ENCODE measurements at regions of chr12 and their contacts with region 1.

Region 1: DNA sequence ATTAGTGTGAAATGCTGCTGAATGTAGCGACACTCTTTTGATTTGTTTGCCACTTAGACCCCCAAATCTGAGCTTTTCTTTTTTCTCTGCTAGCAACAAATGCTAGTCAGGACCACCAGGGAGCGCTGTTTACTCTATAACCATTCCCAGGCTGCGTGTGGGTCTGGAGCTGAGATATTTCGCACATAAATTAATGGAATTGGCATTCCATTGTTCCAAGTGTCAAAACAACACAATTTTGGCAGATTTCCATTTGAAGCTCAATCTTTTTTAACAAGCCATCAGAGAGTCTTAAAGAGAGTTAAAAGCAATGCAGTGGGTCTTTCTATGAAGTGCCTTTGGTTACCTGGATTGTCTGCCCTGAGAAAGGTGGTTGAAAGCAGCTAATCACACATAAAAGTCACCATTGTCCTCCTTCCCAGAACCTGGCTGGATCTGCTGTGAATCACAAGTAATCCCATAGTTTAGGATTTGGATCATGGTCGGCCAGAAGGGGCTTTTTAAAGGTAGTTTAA is 7.4 kb upstream of the TMEM132C start:
- DNase-seq: no peak
- CTCF ChIP-seq: peak; percentile 57

Region 2: DNA sequence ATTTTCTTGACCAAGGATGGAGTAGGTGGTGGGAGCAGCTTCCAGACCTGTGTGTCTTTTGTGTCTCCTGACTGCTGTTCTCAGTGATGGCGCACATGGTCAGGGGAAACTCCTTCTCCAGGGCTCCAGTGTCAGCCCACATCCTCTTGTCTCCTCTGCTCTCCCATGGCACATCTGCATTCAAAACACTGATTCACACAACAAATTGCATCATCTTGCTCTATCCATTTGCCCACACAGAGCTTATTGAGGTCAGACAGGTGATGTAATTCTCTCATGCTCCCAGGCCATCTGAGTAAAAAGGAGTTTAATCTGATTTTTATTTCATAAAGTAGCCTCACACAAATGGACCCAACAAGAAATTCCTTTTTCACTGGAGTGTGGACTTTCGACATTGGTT is 14.5 kb before region 1 on chr12:
- CTCF ChIA-PET with region 1: interaction called, 10 read pairs
- POLR2A ChIA-PET with region 1: no interaction called
- DNase-seq: no peak
- CTCF ChIP-seq: no peak

Region 3: DNA sequence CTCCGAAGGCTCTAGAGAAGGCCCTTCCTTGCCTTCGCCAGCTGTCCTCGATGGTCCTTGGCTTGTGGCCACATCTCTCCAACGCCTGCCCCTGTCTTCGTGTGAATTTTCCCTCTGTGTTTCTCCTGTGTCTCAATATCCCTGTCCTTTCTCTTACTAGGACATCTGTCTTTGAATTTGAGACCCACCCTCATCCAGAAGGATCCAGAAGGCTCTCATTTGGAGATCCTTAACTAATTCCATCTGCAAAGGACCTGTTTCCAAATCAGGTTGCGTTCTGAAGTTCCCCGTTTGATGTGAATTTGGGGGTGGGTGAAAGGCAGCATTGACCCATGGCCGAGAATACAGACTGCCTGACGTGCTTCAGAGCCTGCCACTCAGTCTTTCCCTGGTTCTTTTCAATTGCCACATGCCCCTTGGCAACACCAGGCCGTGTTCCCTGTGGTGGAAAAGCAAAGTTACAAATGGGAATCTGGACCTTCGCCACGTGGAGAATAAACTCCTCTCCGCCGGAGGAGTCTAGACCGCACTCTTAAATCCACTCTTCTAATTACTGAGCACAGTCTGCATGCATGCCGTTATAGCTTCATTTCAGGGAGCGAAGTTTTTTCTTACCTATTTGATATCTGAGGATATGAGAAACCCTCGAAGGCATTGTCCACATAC is 166.2 kb after region 1 on chr12:
- CTCF ChIA-PET with region 1: no interaction called
- POLR2A ChIA-PET with region 1: no interaction called
- DNase-seq: no peak
- CTCF ChIP-seq: no peak

Region 4: GRCh38 chr12:129083121-129083840 is 823.7 kb after region 1 on chr12:
- CTCF ChIA-PET with region 1: no interaction called
- POLR2A ChIA-PET with region 1: no interaction called
- DNase-seq: no peak
- CTCF ChIP-seq: no peak

Region 5: GRCh38 chr12:129911428-129912049 is 1651.9 kb after region 1 on chr12:
- CTCF ChIA-PET with region 1: interaction called, 38 read pairs
- POLR2A ChIA-PET with region 1: no interaction called
- DNase-seq: peak; percentile 64
- CTCF ChIP-seq: peak; percentile 95

Region 6: DNA sequence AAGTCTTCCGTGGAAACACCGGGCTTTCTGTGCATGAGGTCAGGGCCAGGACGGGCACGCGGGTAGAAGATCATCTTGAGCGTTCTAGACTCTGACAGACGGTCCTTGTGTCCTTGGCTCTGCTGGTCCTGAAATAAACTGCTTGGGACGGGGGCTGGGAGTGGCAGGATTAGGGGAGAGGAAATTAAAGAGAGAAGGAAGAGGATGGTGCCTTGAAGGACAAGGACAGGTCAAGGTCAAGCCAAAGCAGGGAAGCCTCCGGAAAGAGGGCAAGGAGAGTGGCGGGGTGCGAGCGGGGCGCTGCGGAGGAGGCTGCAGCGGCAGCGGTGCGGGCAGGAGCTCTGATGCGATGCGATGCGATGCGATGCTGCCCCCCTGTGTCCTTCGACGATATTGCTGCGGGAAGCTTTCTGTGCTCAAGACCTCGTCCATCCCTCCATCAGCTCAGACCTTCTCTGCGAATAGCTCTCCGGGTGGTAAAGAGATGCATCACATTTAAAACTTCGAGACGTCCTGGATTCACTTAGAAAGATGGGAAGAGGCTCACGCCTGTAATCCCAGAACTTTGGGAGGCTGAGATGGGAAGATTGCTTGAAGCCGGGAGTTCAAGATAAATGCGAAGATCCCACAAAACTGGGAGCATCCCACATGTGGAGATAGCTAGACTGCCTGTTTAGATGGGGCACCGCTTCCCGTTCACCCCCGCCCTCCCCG is 1754.3 kb after region 1 on chr12:
- CTCF ChIA-PET with region 1: interaction called, 21 read pairs
- POLR2A ChIA-PET with region 1: no interaction called
- DNase-seq: peak; percentile 64
- CTCF ChIP-seq: peak; percentile 64